CD8-positive, alpha-beta T cell (primary cell): ENCODE measurements at regions of chr1 and their contacts with region 1.

Region 1: DNA sequence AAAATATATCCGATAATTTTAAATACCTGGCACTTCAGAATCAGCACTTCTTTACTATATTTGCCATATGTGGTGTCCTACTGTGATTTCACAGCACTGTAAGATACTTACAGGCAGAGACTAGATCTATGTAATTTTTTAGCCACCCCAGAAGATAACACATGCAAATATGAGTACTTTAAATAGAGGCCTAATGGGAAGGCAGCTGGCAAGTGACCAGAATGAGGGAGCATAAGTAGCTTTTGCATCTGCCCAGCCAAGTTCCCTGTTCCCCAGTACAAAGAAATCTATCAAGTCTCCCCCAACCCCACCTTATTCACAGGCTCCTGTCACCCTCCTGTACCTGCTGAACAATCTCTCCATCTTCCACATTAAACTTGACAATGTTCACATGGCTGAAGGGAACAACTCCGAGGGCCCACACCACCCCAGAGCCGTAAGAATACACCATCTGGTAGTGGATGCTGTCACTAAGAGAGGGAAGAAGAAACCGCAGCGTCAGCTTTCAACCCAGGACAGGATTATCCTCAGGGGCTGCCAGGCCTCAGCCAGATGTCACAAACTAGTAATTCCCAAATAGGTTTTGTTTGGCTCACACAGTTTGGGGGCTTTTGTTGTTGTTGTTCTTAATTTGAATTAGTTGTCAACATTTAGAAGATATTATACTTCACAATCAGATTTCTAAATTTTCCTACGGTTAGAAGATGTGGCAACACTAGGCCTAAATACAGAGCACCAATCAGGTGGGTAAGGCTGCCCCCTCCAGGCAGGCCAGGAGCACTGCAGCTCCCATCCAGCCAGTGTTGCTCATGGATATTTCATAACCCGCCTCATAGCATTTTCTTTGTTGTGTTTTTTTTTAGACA is 10.4 kb downstream of the EMC1 start:
- DNase-seq: peak; percentile 37 to 74 (median 67)
- ATAC-seq: peak; percentile 100
- H3K4me3 ChIP-seq: no peak overlapping the region
- H3K4me3 Mint-ChIP-seq: no peak overlapping the region
- H3K27ac ChIP-seq: no peak overlapping the region
- H3K27ac Mint-ChIP-seq: no peak overlapping the region
- H3K4me1 ChIP-seq: no peaks in the 10 kb centered on the region
- H3K4me1 Mint-ChIP-seq: no peaks in the 10 kb centered on the region
- H3K27me3 ChIP-seq: no peaks in the 10 kb centered on the region
- H3K27me3 Mint-ChIP-seq: no peaks in the 10 kb centered on the region
- CTCF ChIP-seq: peak; percentile 99

Region 2: DNA sequence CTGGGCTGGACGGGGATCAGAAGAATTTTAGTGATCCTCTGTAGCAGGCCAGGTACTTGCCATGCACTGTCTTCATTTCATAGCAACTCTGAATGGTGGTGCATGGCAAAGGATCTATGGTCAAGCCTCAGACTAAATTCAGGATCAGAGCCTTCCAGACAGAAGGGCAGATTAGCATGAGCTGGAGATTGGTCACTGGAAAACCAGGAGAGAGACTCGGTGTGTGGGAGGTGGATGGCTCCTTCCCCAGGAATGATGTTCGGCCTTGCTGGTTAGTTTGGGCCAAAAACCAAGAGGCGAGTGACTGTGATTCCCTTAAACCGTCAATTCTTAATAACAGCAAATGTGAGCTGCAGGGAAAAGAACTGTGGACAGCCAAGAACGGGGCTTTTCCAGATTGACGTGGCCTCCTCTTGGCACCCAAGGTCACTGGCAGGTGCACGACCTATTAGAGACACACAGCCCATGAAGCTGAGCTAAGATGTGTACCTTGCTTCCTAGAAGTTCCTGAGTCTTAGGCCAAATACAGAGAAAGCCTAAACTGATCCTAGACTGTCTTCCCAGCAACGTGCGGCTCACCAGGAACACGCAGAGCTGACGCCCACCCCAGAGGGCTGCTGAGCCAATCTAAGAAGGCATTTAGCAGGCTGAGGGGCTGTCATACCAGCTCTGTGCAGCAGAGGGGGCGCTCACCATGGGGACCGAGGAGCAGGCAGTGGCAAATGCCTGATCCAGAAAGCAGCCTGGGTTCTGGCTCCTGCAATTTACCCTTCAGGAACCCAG is 357.1 kb before region 1 on chr1:
- CTCF ChIA-PET with region 1: interaction called, 14 read pairs
- POLR2A ChIA-PET with region 1: no interaction called
- intact Hi-C with region 1: loop called in 1 of 2 experiments (anchors 1 kb)
- DNase-seq: peak; percentile 51 to 82 (median 76)
- ATAC-seq: peak; percentile 97
- H3K4me3 ChIP-seq: no peak overlapping the region
- H3K4me3 Mint-ChIP-seq: no peak overlapping the region
- H3K27ac ChIP-seq: no peak overlapping the region
- H3K27ac Mint-ChIP-seq: no peak overlapping the region
- H3K4me1 ChIP-seq: no peaks in the 10 kb centered on the region
- H3K4me1 Mint-ChIP-seq: no peaks in the 10 kb centered on the region
- H3K27me3 ChIP-seq: no peaks in the 10 kb centered on the region
- H3K27me3 Mint-ChIP-seq: no peaks in the 10 kb centered on the region
- CTCF ChIP-seq: peak; percentile 86

Region 3: GRCh38 chr1:19179597-19180264 is 61.2 kb before region 1 on chr1:
- CTCF ChIA-PET with region 1: interaction called, 34 read pairs
- POLR2A ChIA-PET with region 1: no interaction called
- intact Hi-C with region 1: loop called (anchors 1 kb)
- DNase-seq: peak in 8 of 9 experiments; percentile 11 to 61 (median 39)
- ATAC-seq: peak; percentile 83
- H3K4me3 ChIP-seq: no peak overlapping the region
- H3K4me3 Mint-ChIP-seq: peak overlapping the region; percentile 24
- H3K27ac ChIP-seq: peak overlapping the region; percentile 19 to 63
- H3K27ac Mint-ChIP-seq: peak overlapping the region; percentile 41
- H3K4me1 ChIP-seq: peaks cover 15% of the 10 kb centered on the region
- H3K4me1 Mint-ChIP-seq: peaks cover 24% of the 10 kb centered on the region
- H3K27me3 ChIP-seq: no peaks in the 10 kb centered on the region
- H3K27me3 Mint-ChIP-seq: no peaks in the 10 kb centered on the region
- CTCF ChIP-seq: peak; percentile 36

Region 4: GRCh38 chr1:19203440-19203839 is 37.5 kb before region 1 on chr1:
- CTCF ChIA-PET with region 1: interaction called, 7 read pairs
- POLR2A ChIA-PET with region 1: no interaction called
- intact Hi-C with region 1: loop called in 1 of 2 experiments (anchors 2 kb)
- DNase-seq: no peak
- ATAC-seq: no peak
- H3K4me3 ChIP-seq: no peak overlapping the region
- H3K4me3 Mint-ChIP-seq: no peak overlapping the region
- H3K27ac ChIP-seq: no peak overlapping the region
- H3K27ac Mint-ChIP-seq: no peak overlapping the region
- H3K4me1 ChIP-seq: peaks cover 29% of the 10 kb centered on the region
- H3K4me1 Mint-ChIP-seq: peaks cover 59% of the 10 kb centered on the region
- H3K27me3 ChIP-seq: no peaks in the 10 kb centered on the region
- H3K27me3 Mint-ChIP-seq: no peaks in the 10 kb centered on the region
- CTCF ChIP-seq: no peak

Region 5: GRCh38 chr1:19209990-19210771 is 30.7 kb before region 1 on chr1 and contains the start of gene UBR4:
- CTCF ChIA-PET with region 1: interaction called, 7 read pairs
- POLR2A ChIA-PET with region 1: no interaction called
- intact Hi-C with region 1: loop called in 1 of 2 experiments (anchors 1 kb)
- DNase-seq: peak; percentile 91 to 99 (median 97)
- ATAC-seq: peak; percentile 93
- H3K4me3 ChIP-seq: peak within 1 kb of the TSS; percentile 73 to 96
- H3K4me3 Mint-ChIP-seq: peak within 1 kb of the TSS; percentile 96
- H3K27ac ChIP-seq: peak within 1 kb of the TSS; percentile 86 to 96
- H3K27ac Mint-ChIP-seq: peak within 1 kb of the TSS; percentile 99
- H3K4me1 ChIP-seq: peaks cover 48% of the 10 kb centered on the region
- H3K4me1 Mint-ChIP-seq: peaks cover 76% of the 10 kb centered on the region
- H3K27me3 ChIP-seq: no peaks in the 10 kb centered on the region
- H3K27me3 Mint-ChIP-seq: no peaks in the 10 kb centered on the region
- CTCF ChIP-seq: no peak
- total RNA-seq, gene UBR4: 146 to 148 TPM

Region 6: DNA sequence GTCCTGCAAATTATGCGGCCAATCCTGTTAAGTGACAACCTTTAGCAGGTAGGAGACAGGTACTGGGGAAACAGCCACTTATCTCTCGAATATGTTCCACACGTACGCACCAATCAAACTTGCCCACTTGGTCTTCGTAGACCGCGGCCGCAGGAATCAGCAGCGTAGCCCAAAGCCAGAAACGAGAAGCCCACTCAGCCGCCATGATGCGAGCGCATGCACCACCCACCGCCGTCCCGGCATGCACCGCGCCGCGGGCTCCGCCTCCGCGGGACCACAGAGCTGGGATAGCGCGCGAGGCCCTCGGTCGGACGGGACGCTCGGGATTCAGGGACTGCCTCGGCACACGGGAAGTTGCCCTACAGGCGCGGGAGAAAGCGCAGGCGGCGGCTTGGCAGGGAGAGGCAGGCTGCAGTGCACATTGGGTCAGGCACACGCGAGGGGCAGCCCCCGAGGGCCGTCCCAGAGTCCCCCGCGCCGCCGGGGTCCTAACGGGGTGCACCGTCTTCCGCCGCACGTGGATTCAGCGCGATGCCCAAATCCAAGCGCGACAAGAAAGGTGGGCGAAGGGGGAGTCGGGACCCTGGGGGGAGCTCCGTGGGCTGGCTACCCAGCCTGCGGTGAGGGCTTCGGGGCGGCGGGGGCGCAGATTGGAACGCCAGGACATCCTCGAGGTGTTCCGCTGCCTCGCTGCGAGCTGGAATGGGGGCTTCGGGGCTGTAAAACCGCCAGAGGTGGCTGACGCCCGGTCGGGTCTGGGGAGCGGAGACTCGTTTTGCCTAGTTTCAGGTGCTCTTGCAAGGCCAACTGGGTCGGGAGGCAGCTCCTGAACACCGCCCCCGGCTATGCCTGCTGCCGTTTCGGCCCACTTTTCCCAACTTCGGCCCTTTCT is 10.6 kb after region 1 on chr1 and contains the starts of genes EMC1 and MRTO4:
- CTCF ChIA-PET with region 1: interaction called, 19 read pairs
- POLR2A ChIA-PET with region 1: no interaction called
- intact Hi-C with region 1: no loop called
- DNase-seq: peak; percentile 83 to 94 (median 87)
- ATAC-seq: peak; percentile 93
- H3K4me3 ChIP-seq: peak within 1 kb of the TSS; percentile 66 to 88
- H3K4me3 Mint-ChIP-seq: peak within 1 kb of the TSS; percentile 95
- H3K27ac ChIP-seq: peak within 1 kb of the TSS; percentile 83 to 98
- H3K27ac Mint-ChIP-seq: peak within 1 kb of the TSS; percentile 94
- H3K4me1 ChIP-seq: peaks cover 34% of the 10 kb centered on the region
- H3K4me1 Mint-ChIP-seq: peaks cover 38% of the 10 kb centered on the region
- H3K27me3 ChIP-seq: no peaks in the 10 kb centered on the region
- H3K27me3 Mint-ChIP-seq: no peaks in the 10 kb centered on the region
- CTCF ChIP-seq: no peak
- total RNA-seq, gene EMC1: 28.2 to 33.5 TPM
- total RNA-seq, gene MRTO4: 18.9 to 19.5 TPM